ENCODE measurements at regions of chr17 and their contacts with region 1.

Region 1: DNA sequence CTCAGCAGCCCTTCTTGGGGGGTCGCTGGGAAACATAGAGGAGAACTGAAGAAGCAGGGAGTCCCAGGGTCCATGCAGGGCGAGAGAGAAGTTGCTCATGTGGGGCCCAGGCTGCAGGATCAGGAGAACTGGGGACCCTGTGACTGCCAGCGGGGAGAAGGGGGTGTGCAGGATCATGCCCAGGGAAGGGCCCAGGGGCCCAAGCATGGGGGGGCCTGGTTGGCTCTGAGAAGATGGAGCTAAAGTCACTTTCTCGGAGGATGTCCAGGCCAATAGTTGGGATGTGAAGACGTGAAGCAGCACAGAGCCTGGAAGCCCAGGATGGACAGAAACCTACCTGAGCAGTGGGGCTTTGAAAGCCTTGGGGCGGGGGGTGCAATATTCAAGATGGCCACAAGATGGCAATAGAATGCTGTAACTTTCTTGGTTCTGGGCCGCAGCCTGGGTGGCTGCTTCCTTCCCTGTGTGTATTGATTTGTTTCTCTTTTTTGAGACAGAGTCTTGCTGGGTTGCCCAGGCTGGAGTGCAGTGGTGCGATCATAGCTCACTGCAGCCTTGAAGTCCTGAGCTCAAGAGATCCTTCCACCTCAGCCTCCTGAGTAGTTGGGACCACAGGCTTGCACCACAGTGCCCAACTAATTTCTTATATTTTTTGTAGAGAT is 3.4 kb downstream of the STH start:
- DNase-seq: peak; percentile 43
- ATAC-seq: peak; percentile 95
- H3K4me3 ChIP-seq: no peak overlapping the region
- H3K27ac ChIP-seq: no peak overlapping the region
- H3K4me1 ChIP-seq: 0 out of 4 replicates have a peak, but pooled peaks cover 0 to 4% of the 10 kb centered on the region in 2 experiments
- H3K27me3 ChIP-seq: no peaks in the 10 kb centered on the region
- CTCF ChIP-seq: peak; percentile 90 to 99 (median 92)
- POLR2A ChIP-seq: no peak
- RAD21 ChIP-seq: peak; percentile 96

Region 2: GRCh38 chr17:46193626-46194392 is 191.4 kb after region 1 on chr17:
- CTCF ChIA-PET with region 1: interaction called, 5 read pairs
- POLR2A ChIA-PET with region 1: no interaction called
- RAD21 ChIA-PET with region 1: no interaction called
- intact Hi-C with region 1: loop called (anchors 5 kb)
- DNase-seq: peak; percentile 89
- ATAC-seq: peak; percentile 93
- H3K4me3 ChIP-seq: peak overlapping the region; percentile 65 to 84
- H3K27ac ChIP-seq: peak overlapping the region; percentile 98
- H3K4me1 ChIP-seq: peaks cover 15 to 37% of the 10 kb centered on the region in 2 experiments
- H3K27me3 ChIP-seq: no peaks in the 10 kb centered on the region
- CTCF ChIP-seq: peak in 2 of 3 experiments; percentile 17 to 40; a peak in 2 of 6 replicates
- POLR2A ChIP-seq: peak; percentile 86
- RAD21 ChIP-seq: no peak

Region 3: GRCh38 chr17:46212634-46213435 is 210.4 kb after region 1 on chr17:
- CTCF ChIA-PET with region 1: interaction called, 11 read pairs
- POLR2A ChIA-PET with region 1: no interaction called
- RAD21 ChIA-PET with region 1: no interaction called
- intact Hi-C with region 1: loop called (anchors 1 kb)
- DNase-seq: peak; percentile 48
- ATAC-seq: peak; percentile 89
- H3K4me3 ChIP-seq: no peak overlapping the region
- H3K27ac ChIP-seq: no peak overlapping the region
- H3K4me1 ChIP-seq: no peaks in the 10 kb centered on the region
- H3K27me3 ChIP-seq: no peaks in the 10 kb centered on the region
- CTCF ChIP-seq: peak; percentile 76 to 91 (median 83); a peak in 5 of 6 replicates
- POLR2A ChIP-seq: no peak
- RAD21 ChIP-seq: peak; percentile 74

Region 4: DNA sequence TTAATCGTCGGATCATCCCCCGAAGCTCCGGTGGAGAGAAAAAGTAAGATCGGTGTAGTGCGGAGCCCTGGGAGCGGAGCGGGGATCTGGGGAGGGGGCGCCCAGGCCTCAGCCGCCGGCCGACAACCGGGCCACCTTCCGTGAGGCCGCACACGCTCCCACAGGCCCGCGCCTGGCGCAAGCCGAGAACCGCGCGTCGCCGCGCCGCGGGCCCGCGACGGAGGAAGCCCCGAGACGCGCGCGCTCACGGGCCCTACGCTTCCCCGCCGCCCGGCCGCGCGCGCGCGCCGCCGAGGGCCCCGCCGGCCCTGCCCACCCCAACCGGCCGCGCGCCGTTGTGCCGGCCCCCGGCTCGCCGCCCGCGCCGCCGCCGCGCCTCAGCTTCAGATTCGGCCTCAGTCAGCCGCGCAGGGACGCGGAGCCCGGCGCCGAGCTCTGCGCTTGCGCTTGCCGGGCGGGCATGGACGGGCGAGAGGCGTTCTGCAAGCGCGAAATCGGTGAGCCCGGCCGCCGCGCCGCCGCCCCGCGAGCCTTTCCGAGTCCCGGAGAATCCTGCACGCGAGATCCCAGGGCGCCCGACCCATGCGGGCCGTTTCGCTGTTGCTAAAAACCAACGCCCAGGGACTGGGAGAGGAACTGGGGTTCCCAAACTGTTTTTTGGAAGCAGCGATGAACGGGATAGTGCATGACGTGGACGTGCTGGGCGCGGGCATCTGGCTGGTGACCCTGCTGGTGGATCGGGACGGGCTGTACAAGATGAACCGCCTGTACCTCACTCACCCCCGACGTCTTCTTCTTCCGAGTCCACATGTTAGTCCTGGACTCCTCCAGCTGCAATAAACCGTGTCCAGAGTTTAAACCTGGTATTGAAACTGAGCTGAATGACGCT is 264.5 kb after region 1 on chr17:
- CTCF ChIA-PET with region 1: no interaction called
- POLR2A ChIA-PET with region 1: no interaction called
- RAD21 ChIA-PET with region 1: no interaction called
- intact Hi-C with region 1: loop called (anchors 5 kb)
- DNase-seq: peak; percentile 66
- ATAC-seq: peak; percentile 89
- H3K4me3 ChIP-seq: peak overlapping the region; percentile 84 to 93
- H3K27ac ChIP-seq: peak overlapping the region; percentile 80
- H3K4me1 ChIP-seq: peaks cover 8 to 32% of the 10 kb centered on the region in 2 experiments
- H3K27me3 ChIP-seq: no peaks in the 10 kb centered on the region
- CTCF ChIP-seq: no peak
- POLR2A ChIP-seq: peak; percentile 90
- RAD21 ChIP-seq: no peak

Region 5: GRCh38 chr17:46745376-46745775 is 742.9 kb after region 1 on chr17:
- CTCF ChIA-PET with region 1: no interaction called
- POLR2A ChIA-PET with region 1: no interaction called
- RAD21 ChIA-PET with region 1: no interaction called
- intact Hi-C with region 1: no loop called
- DNase-seq: no peak
- ATAC-seq: no peak
- H3K4me3 ChIP-seq: no peak overlapping the region
- H3K27ac ChIP-seq: no peak overlapping the region
- H3K4me1 ChIP-seq: peaks cover 11 to 17% of the 10 kb centered on the region in 2 experiments
- H3K27me3 ChIP-seq: no peaks in the 10 kb centered on the region
- CTCF ChIP-seq: no peak
- POLR2A ChIP-seq: no peak
- RAD21 ChIP-seq: no peak

Region 6: GRCh38 chr17:46836500-46836899 is 834.1 kb after region 1 on chr17:
- CTCF ChIA-PET with region 1: no interaction called
- POLR2A ChIA-PET with region 1: no interaction called
- RAD21 ChIA-PET with region 1: no interaction called
- intact Hi-C with region 1: loop called (anchors 5 kb)
- DNase-seq: no peak
- ATAC-seq: no peak
- H3K4me3 ChIP-seq: no peak overlapping the region
- H3K27ac ChIP-seq: no peak overlapping the region
- H3K4me1 ChIP-seq: peaks cover 0 to 3% of the 10 kb centered on the region in 2 experiments; a peak in 1 of 4 replicates
- H3K27me3 ChIP-seq: no peaks in the 10 kb centered on the region
- CTCF ChIP-seq: no peak
- POLR2A ChIP-seq: no peak
- RAD21 ChIP-seq: no peak